ENCODE measurements at regions of chr7 and their contacts with region 1.

Region 1: GRCh38 chr7:129875745-129876411 is 76.9 kb downstream of the UBE2H start:
- DNase-seq: peak; percentile 78 to 85 (median 81)
- ATAC-seq: peak; percentile 78
- H3K4me3 ChIP-seq: peak overlapping the region; percentile 6; the same call in 1 of the 2 replicates
- H3K27ac ChIP-seq: peak overlapping the region; percentile 75
- H3K4me1 ChIP-seq: peaks cover 8 to 54% of the 10 kb centered on the region in 2 experiments; a peak in 4 of 5 replicates
- H3K27me3 ChIP-seq: no peaks in the 10 kb centered on the region
- CTCF ChIP-seq: no peak
- EP300 ChIP-seq: no peak; the same call in 1 of the 2 replicates
- POLR2A ChIP-seq: peak; percentile 46
- RAD21 ChIP-seq: no peak

Region 2: DNA sequence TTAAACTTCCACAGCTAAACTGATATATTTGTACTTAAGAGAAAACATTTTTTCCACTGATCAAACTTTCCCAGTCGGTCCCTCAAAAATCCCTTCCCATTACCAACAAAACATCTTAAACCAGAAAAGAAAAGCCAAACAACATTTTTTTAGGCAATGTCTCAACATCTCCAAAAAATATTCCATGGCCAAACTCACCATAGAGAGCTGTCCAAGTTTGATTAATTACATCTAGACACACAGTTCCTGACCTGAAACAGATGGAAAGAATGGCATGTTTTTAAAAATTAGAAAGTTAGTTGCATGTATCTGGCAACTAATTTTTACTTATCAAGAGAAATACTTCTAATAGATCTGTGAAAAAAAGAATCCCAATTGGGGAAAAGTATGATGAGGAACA is 18.6 kb before region 1 on chr7:
- CTCF ChIA-PET with region 1: no interaction called
- POLR2A ChIA-PET with region 1: interaction called, 7 read pairs
- in situ Hi-C with region 1: no loop called
- intact Hi-C with region 1: loop called (anchors 2 kb)
- DNase-seq: no peak
- ATAC-seq: no peak
- H3K4me3 ChIP-seq: no peak overlapping the region
- H3K27ac ChIP-seq: no peak overlapping the region
- H3K4me1 ChIP-seq: peaks cover 13 to 31% of the 10 kb centered on the region in 2 experiments
- H3K27me3 ChIP-seq: no peaks in the 10 kb centered on the region
- CTCF ChIP-seq: no peak
- EP300 ChIP-seq: no peak
- POLR2A ChIP-seq: no peak
- RAD21 ChIP-seq: no peak

Region 3: DNA sequence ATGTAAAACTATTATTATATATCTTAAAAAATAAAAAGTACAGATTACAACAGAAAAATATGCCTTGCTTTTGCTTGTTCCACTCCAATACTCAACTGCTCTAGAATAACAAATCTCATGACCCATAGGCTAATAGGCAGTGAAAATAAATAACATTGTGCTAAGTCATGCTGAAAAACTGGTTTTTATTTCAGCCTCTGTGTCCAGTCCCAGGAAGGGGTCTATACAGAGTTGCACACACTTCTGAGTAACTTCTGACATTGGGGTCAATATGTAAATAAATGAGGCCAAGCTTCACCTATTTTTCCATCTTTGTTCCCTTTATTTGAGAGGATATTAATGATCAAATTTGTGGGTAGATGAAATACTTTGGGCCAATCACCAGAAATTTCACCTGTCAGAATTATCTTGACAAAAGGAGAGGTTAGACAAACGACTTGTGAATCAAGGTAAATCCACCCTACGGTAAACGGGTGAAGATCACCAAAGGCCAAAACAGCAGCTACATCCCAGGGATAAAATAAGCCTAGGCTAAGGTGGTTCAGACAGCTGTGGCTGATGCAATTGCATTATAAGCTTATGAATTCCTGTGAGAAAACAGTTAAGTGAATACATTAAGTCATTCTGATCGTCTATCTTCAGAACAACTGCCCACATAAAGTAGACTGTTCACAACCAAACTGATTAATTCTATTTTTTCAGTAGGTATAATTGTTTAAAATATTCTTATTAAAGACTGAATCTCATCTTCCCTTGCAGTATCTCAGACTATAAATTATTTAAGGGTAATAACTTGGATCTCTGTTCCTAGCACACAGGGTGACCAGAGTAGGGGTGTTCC is 10.6 kb before region 1 on chr7:
- CTCF ChIA-PET with region 1: no interaction called
- POLR2A ChIA-PET with region 1: interaction called, 13 read pairs
- in situ Hi-C with region 1: no loop called
- intact Hi-C with region 1: no loop called
- DNase-seq: no peak
- ATAC-seq: peak; percentile 70
- H3K4me3 ChIP-seq: no peak overlapping the region
- H3K27ac ChIP-seq: peak overlapping the region; percentile 36
- H3K4me1 ChIP-seq: peaks cover 11 to 46% of the 10 kb centered on the region in 2 experiments; a peak in 4 of 5 replicates
- H3K27me3 ChIP-seq: no peaks in the 10 kb centered on the region
- CTCF ChIP-seq: no peak
- EP300 ChIP-seq: peak; percentile 59
- POLR2A ChIP-seq: no peak; the same call in 1 of the 2 replicates
- RAD21 ChIP-seq: 0 out of 4 replicates have a peak, but pooled peaks of 1 of the 2 experiments have one; percentile 9

Region 4: DNA sequence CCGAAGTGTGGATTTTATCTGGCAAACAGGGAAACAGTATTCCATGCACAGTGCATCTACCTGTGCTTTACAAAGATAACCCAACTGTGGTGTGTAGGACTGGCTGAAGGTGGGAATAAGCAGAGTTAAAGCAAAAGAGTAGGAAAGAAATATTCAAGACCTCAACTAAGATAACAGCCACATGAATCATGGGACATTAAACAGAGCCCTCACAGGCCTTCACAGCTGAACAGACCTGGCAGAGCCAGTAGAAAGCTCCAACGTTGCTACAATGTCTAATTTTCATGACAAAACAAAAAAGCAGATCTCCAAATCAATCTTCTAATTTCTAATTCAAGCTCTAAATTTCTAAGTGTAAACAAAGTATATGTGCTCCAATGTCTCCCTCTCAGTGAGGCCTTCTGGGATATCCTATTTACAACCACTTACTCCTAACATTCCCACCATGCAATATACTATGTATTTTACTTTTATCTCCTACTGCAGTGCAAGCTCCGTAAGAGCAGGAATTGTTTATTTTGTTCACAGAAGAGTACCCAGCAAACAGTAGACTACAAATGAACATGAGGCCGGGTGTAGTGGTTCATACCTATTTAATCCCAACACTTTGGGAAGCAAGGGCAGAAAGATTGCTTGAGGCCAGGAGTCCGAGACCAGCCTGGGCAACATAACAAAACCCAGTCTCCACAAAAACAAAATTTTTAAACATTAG is 13.4 kb after region 1 on chr7:
- CTCF ChIA-PET with region 1: no interaction called
- POLR2A ChIA-PET with region 1: interaction called, 24 read pairs
- in situ Hi-C with region 1: no loop called
- intact Hi-C with region 1: no loop called
- DNase-seq: no peak
- ATAC-seq: peak; percentile 31; the same call in 2 of the 3 replicates
- H3K4me3 ChIP-seq: no peak overlapping the region
- H3K27ac ChIP-seq: no peak overlapping the region; the same call in 2 of the 3 replicates
- H3K4me1 ChIP-seq: peaks cover 0 to 6% of the 10 kb centered on the region in 2 experiments; a peak in 2 of 5 replicates
- H3K27me3 ChIP-seq: no peaks in the 10 kb centered on the region
- CTCF ChIP-seq: no peak
- EP300 ChIP-seq: no peak
- POLR2A ChIP-seq: no peak
- RAD21 ChIP-seq: no peak

Region 5: GRCh38 chr7:129952653-129953560 is 77.0 kb after region 1 on chr7 and contains the start of gene UBE2H:
- CTCF ChIA-PET with region 1: no interaction called
- POLR2A ChIA-PET with region 1: interaction called, 6 read pairs
- in situ Hi-C with region 1: no loop called
- intact Hi-C with region 1: loop called (anchors 2 kb)
- DNase-seq: peak; percentile 98 to 99 (median 99)
- ATAC-seq: peak; percentile 80
- H3K4me3 ChIP-seq: peak within 1 kb of the TSS; percentile 69
- H3K27ac ChIP-seq: peak within 1 kb of the TSS; percentile 74
- H3K4me1 ChIP-seq: peaks cover 45 to 53% of the 10 kb centered on the region in 2 experiments
- H3K27me3 ChIP-seq: no peaks in the 10 kb centered on the region
- CTCF ChIP-seq: peak in 1 of 3 experiments; percentile 21; a peak in 1 of 6 replicates
- EP300 ChIP-seq: no peak; the same call in 1 of the 2 replicates
- POLR2A ChIP-seq: peak; percentile 73
- RAD21 ChIP-seq: peak in 1 of 2 experiments; percentile 12; a peak in 1 of 4 replicates
- polyA plus RNA-seq, gene UBE2H: 6.3 to 6.9 TPM

Measured in K562 (cell line).